HepG2 (cell line): ENCODE measurements at regions of chr7 and their contacts with region 1.

Region 1: GRCh38 chr7:30564243-30564892 is 30.3 kb upstream of the GARS1 start:
- DNase-seq: peak; percentile 75
- ATAC-seq: peak; percentile 99
- H3K4me3 ChIP-seq: no peak overlapping the region
- H3K27ac ChIP-seq: no peak overlapping the region
- H3K4me1 ChIP-seq: no peaks in the 10 kb centered on the region
- H3K27me3 ChIP-seq: no peaks in the 10 kb centered on the region
- CTCF ChIP-seq: peak; percentile 95
- EP300 ChIP-seq: no peak
- POLR2A ChIP-seq: no peak
- RAD21 ChIP-seq: peak; percentile 93

Region 2: GRCh38 chr7:30164567-30164966 is 399.8 kb before region 1 on chr7:
- CTCF ChIA-PET with region 1: interaction called, 5 read pairs
- POLR2A ChIA-PET with region 1: no interaction called
- in situ Hi-C with region 1: no loop called
- intact Hi-C with region 1: loop called (anchors 1 kb)
- DNase-seq: peak; percentile 60
- ATAC-seq: peak; percentile 50
- H3K4me3 ChIP-seq: no peak overlapping the region
- H3K27ac ChIP-seq: no peak overlapping the region
- H3K4me1 ChIP-seq: peaks cover 60% of the 10 kb centered on the region
- H3K27me3 ChIP-seq: no peaks in the 10 kb centered on the region
- CTCF ChIP-seq: peak; percentile 71
- EP300 ChIP-seq: no peak
- POLR2A ChIP-seq: no peak
- RAD21 ChIP-seq: peak; percentile 72

Region 3: GRCh38 chr7:30276203-30276900 is 288.0 kb before region 1 on chr7:
- CTCF ChIA-PET with region 1: no interaction called
- POLR2A ChIA-PET with region 1: no interaction called
- in situ Hi-C with region 1: loop called (anchors 10 kb)
- intact Hi-C with region 1: loop called (anchors 1 kb)
- DNase-seq: peak; percentile 67
- ATAC-seq: peak; percentile 93
- H3K4me3 ChIP-seq: no peak overlapping the region
- H3K27ac ChIP-seq: no peak overlapping the region
- H3K4me1 ChIP-seq: peaks cover 48% of the 10 kb centered on the region
- H3K27me3 ChIP-seq: no peaks in the 10 kb centered on the region
- CTCF ChIP-seq: peak; percentile 88
- EP300 ChIP-seq: peak in 1 of 2 experiments; percentile 34; a peak in 2 of 4 replicates
- POLR2A ChIP-seq: no peak
- RAD21 ChIP-seq: peak; percentile 76

Region 4: DNA sequence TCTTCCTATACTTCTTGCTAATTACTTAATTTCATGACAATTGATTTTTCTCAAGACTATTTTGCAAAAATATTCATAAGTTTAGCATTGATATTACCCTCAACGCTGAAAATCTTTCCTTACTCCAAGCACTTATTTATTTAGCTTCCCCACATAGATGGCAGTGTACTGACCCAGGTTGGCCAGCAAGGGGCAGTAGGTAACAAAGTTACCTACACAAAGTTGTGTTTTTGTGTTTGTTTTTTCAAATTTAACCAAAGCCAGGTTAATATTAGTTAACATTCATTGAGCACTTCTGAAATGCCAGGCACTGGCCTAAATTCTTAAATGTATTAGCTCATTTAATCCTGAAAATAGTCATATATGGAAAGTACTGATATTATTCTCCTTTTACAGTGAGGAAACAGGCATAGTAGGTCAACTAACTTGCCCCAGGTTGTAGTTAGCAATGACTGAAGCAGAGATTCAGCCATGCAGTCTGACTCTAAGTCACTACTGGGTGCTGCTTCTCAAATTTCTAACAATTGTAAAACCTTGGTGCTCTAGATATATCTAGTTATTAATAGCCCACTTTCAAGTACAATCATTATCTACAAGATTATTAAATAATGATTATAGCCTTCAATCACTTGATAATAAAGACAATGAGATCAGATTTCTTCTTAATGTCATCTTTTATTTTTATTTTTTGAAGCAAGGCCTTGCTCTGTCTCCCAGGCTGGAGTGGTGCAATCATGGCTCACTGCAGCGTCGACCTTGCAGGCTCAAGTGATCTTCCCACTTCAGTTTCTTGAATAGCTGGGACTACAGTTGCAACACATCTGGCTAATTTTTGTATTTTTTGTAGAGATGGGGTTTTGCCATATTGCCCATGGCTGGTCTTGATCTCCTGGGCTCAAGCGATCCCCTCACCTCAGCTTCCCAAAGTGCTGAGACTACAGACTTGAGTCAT is 54.0 kb before region 1 on chr7:
- CTCF ChIA-PET with region 1: interaction called, 29 read pairs
- POLR2A ChIA-PET with region 1: no interaction called
- in situ Hi-C with region 1: no loop called
- intact Hi-C with region 1: no loop called
- DNase-seq: peak; percentile 42
- ATAC-seq: peak; percentile 73
- H3K4me3 ChIP-seq: no peak overlapping the region
- H3K27ac ChIP-seq: no peak overlapping the region
- H3K4me1 ChIP-seq: peaks cover 6% of the 10 kb centered on the region
- H3K27me3 ChIP-seq: no peaks in the 10 kb centered on the region
- CTCF ChIP-seq: peak; percentile 76
- EP300 ChIP-seq: no peak
- POLR2A ChIP-seq: no peak
- RAD21 ChIP-seq: peak; percentile 47

Region 5: GRCh38 chr7:30548762-30549344 is 15.5 kb before region 1 on chr7:
- CTCF ChIA-PET with region 1: interaction called, 24 read pairs
- POLR2A ChIA-PET with region 1: no interaction called
- in situ Hi-C with region 1: no loop called
- intact Hi-C with region 1: loop called (anchors 1 kb)
- DNase-seq: peak; percentile 78
- ATAC-seq: peak; percentile 98
- H3K4me3 ChIP-seq: no peak overlapping the region
- H3K27ac ChIP-seq: no peak overlapping the region
- H3K4me1 ChIP-seq: peaks cover 29% of the 10 kb centered on the region
- H3K27me3 ChIP-seq: no peaks in the 10 kb centered on the region
- CTCF ChIP-seq: peak; percentile 88
- EP300 ChIP-seq: no peak
- POLR2A ChIP-seq: no peak
- RAD21 ChIP-seq: peak; percentile 67

Region 6: GRCh38 chr7:30594549-30595435 is 30.4 kb after region 1 on chr7 and contains the start of gene GARS1:
- CTCF ChIA-PET with region 1: no interaction called
- POLR2A ChIA-PET with region 1: no interaction called
- in situ Hi-C with region 1: no loop called
- intact Hi-C with region 1: no loop called
- DNase-seq: peak; percentile 77
- ATAC-seq: peak; percentile 95
- H3K4me3 ChIP-seq: peak within 1 kb of the TSS; percentile 92 to 97 (median 95)
- H3K27ac ChIP-seq: peak within 1 kb of the TSS; percentile 95
- H3K4me1 ChIP-seq: peaks cover 36% of the 10 kb centered on the region
- H3K27me3 ChIP-seq: no peaks in the 10 kb centered on the region; a peak in 1 of 5 replicates
- CTCF ChIP-seq: no peak
- EP300 ChIP-seq: peak; percentile 43 to 88; a peak in 3 of 4 replicates
- POLR2A ChIP-seq: peak; percentile 90 to 95
- RAD21 ChIP-seq: peak; percentile 35; the same call in 1 of the 2 replicates
- total RNA-seq, gene GARS1: 140 and 180 TPM in 2 replicates